WTC11 (cell line): ENCODE measurements at regions of chr5 and their contacts with region 1.

Region 1: GRCh38 chr5:158174918-158175851 is 316.2 kb upstream of the CLINT1 start:
- DNase-seq: peak; percentile 85
- ATAC-seq: peak; percentile 88
- H3K4me3 Mint-ChIP-seq: no peak overlapping the region
- H3K27ac Mint-ChIP-seq: no peak overlapping the region
- H3K4me1 Mint-ChIP-seq: peaks cover 14% of the 10 kb centered on the region
- H3K27me3 Mint-ChIP-seq: no peaks in the 10 kb centered on the region
- CTCF ChIP-seq: peak; percentile 72

Region 2: DNA sequence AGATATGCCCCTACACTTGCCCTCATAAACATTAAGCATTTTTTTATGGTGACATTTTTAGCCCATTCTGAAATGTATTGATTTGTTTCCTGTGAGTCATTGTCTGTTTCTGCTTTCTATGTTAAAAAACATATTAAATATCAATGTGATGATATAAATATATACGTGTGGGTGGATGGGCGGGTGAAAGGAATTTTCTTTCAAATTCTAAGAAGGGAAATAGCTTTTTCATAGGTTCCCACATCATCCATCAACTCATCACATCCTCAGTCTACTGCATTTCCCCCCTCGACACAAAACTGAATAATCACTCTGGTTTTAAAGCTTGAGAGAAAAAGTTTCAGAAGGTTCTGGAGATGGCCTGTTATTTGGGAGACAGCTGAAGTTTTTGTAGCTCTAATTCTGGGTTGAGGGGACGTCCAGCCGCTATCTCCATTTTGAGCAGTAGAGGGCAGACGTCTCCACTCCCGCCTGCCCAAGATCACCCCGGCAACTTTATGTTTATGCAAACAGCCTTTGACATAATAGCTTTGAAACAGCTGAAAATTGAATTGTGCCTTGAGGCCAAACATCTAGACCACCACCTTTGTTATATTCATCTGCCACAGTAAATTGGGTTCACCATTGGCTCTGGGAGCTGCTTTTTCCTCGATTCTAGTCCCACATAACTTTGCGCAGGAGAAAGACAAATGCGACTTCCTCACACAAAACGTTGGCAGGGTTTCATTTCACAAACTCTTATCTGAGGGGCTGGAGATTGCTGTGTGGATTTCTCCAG is 100.0 kb before region 1 on chr5:
- CTCF ChIA-PET with region 1: interaction called, 40 read pairs
- POLR2A ChIA-PET with region 1: no interaction called
- DNase-seq: peak; percentile 66
- ATAC-seq: peak; percentile 87
- H3K4me3 Mint-ChIP-seq: 0 out of 2 replicates have a peak overlapping the region, but pooled peaks have one; percentile 15
- H3K27ac Mint-ChIP-seq: no peak overlapping the region
- H3K4me1 Mint-ChIP-seq: peaks cover 14% of the 10 kb centered on the region
- H3K27me3 Mint-ChIP-seq: peaks cover 3% of the 10 kb centered on the region
- CTCF ChIP-seq: peak; percentile 66

Region 3: DNA sequence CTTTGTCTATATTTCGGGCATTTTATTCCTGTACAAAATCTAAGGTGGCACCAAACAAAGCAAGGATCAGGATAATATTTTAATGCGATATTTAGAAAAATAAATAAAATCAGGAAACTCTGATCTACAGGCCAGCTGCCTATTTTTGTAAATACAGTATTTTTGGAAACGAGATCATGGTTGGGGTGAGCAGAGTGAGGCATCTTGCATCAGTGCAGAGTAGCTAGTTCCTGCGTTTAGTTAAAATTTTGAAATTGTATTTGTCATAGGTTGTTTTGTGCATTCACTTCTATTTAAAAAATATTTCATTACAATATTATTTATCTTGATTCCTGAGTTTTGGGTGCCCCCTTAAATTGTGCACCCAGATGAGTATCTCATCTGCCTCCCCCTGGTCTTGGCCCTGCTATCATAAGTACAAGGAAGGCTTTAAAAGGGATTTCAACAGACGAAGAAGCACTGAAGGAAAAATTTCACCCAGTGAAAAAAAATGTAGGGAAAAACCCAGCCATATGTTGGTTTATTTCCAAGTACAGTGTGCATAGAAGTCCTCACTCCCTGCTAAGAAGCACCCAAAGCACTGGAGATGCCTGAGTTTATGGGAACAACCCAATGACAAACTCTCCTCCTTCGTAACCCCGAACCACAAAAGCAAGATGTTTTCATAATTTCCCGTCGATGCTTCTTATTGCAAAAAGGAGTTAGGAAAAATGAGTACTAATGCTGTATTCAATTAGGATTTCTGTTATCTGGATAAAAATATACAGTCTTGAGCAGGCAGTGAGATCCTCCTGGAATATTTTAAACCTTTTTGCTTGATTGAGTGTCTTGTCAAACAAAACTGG is 11.5 kb before region 1 on chr5:
- CTCF ChIA-PET with region 1: interaction called, 20 read pairs
- POLR2A ChIA-PET with region 1: no interaction called
- DNase-seq: no peak
- ATAC-seq: no peak
- H3K4me3 Mint-ChIP-seq: no peak overlapping the region
- H3K27ac Mint-ChIP-seq: no peak overlapping the region
- H3K4me1 Mint-ChIP-seq: 0 out of 2 replicates have a peak, but pooled peaks cover 13% of the 10 kb centered on the region
- H3K27me3 Mint-ChIP-seq: no peaks in the 10 kb centered on the region
- CTCF ChIP-seq: no peak

Region 4: DNA sequence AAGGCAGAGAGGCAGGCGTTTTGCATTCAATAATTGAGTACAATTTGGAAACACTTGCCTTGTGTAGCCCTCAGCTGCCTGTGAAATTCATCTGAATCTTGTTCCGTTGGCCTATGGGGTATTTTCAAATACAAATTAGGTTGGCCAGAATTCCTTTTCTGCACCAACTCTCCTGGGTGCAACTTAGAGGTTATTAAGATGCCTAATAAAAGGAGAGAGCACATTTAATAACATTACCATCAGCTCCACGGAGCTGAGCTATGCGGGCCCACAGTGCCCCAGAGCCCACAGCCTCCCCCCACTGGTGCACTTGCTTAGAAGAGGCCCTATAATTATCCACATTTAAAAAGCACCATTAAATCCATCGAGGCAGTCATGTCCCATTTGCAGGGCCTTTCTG is 51.3 kb after region 1 on chr5:
- CTCF ChIA-PET with region 1: interaction called, 14 read pairs
- POLR2A ChIA-PET with region 1: no interaction called
- DNase-seq: no peak
- ATAC-seq: no peak
- H3K4me3 Mint-ChIP-seq: no peak overlapping the region
- H3K27ac Mint-ChIP-seq: no peak overlapping the region
- H3K4me1 Mint-ChIP-seq: peaks cover 3% of the 10 kb centered on the region; the same call in 1 of the 2 replicates
- H3K27me3 Mint-ChIP-seq: no peaks in the 10 kb centered on the region
- CTCF ChIP-seq: no peak

Region 5: DNA sequence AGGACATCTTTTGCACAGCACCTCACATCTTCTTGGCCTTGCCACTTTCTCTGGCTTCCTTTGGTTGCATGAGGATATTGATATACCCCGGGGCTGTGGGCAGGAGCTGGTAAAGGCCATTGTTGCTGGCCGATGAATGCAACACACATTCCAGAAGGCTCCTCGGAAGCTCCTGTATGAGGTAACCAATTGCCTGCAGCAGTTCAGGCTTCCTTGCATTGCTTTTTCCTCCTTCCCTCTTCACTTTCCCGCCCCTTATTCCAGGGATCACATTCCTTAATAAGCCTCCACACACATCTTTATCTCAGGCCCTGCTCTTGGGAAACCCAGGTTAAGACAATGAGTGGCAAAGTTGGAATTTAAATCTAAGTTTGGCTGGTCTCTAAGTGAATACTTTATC is 189.2 kb after region 1 on chr5:
- CTCF ChIA-PET with region 1: no interaction called
- POLR2A ChIA-PET with region 1: no interaction called
- DNase-seq: peak; percentile 22
- ATAC-seq: peak; percentile 89
- H3K4me3 Mint-ChIP-seq: no peak overlapping the region
- H3K27ac Mint-ChIP-seq: no peak overlapping the region
- H3K4me1 Mint-ChIP-seq: peaks cover 25% of the 10 kb centered on the region
- H3K27me3 Mint-ChIP-seq: no peaks in the 10 kb centered on the region
- CTCF ChIP-seq: no peak

Region 6: DNA sequence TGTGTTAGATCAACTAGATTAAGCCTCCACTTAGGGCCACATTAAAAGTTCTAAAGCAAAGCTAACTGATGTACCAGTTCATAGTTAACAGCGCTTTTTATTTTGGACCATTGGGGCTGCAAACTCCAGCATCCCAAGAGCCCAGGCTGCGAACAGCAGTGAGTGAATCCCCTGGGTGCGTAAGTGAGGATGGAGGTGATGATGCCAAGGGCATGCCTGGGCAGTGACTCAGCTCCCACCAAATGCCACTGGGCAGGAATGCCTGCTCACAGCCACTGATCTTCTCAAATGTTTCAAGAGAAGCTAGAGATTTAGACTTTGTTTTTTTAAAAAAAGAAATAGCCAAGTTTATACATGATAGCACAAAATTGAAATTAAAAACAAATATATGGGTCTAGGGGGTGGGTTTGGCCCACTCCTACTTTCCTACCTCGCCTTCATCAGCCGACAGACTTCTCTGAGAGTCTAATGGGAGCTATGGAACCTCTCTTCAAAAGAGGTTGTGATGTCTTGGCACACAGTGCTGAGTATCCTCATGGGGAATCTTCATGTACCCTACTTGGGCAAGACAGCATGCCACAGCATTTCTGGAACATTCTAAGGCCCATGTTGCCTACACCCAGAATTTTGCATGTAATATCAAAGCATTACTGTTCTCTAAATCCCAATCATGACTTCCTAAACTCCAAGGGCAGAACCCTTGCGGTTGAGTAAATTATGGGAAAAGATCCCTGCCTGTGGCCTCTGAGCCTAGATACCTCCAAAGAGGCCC is 526.4 kb after region 1 on chr5:
- CTCF ChIA-PET with region 1: interaction called, 12 read pairs
- POLR2A ChIA-PET with region 1: no interaction called
- DNase-seq: no peak
- ATAC-seq: no peak
- H3K4me3 Mint-ChIP-seq: no peak overlapping the region
- H3K27ac Mint-ChIP-seq: no peak overlapping the region
- H3K4me1 Mint-ChIP-seq: peaks cover 59% of the 10 kb centered on the region
- H3K27me3 Mint-ChIP-seq: peaks cover 3% of the 10 kb centered on the region; the same call in 1 of the 2 replicates
- CTCF ChIP-seq: no peak

Region 7: DNA sequence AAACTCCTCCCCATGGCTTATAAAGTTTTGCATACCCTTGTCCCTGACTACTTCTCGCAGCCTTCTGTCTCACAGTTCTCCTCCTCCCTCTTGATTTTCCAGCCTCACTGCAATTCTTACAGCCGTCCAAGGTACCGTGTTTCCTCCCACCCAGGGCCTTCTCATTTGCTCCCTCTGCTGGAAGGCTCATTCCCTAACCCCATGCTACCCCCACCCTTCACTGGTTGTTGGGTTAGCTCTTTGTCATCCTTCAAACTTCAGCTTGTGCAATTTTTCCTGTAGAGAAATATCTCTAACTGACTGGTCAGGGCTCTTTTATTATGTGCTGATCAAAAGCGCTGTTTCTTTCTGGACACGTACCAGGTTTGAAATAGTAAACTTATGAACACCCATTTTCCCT is 595.3 kb after region 1 on chr5:
- CTCF ChIA-PET with region 1: interaction called, 13 read pairs
- POLR2A ChIA-PET with region 1: no interaction called
- DNase-seq: peak; percentile 45
- ATAC-seq: peak; percentile 97
- H3K4me3 Mint-ChIP-seq: no peak overlapping the region
- H3K27ac Mint-ChIP-seq: no peak overlapping the region
- H3K4me1 Mint-ChIP-seq: peaks cover 16% of the 10 kb centered on the region
- H3K27me3 Mint-ChIP-seq: no peaks in the 10 kb centered on the region
- CTCF ChIP-seq: peak; percentile 35; the same call in 1 of the 2 replicates